B cell (primary cell): ENCODE measurements at regions of chr5 and their contacts with region 1.

Region 1: DNA sequence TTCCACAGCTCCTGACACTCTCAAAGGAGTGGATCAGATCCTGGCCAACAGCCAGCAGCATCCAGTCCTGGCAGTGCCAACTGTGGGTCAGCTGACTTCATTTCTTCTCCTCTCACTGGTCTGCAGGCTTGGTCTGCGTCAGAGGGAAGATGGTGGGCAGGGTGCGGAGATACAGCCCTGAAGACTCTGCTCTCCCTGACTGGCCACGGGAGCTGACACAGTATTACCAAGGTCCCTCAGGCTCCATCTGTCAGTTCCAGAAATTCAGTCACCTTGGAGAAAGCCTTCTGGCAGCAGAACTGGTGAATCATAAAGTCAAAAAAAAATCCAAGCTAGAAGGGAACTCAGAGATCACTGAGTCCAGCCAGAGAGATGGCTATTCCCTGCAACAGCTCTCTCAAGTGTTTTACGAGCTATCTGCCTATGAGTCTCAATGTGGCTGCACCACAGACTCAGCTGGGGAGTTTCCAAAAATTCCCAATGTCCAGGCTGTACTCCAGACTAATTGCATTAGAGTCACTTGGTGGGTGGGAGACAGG is 28.0 kb downstream of the C1QTNF2 start:
- DNase-seq: no peak
- ATAC-seq: no peak
- H3K4me3 ChIP-seq: no peak overlapping the region
- H3K4me3 Mint-ChIP-seq: no peak overlapping the region
- H3K27ac ChIP-seq: no peak overlapping the region
- H3K27ac Mint-ChIP-seq: no peak overlapping the region
- H3K4me1 ChIP-seq: no peaks in the 10 kb centered on the region
- H3K4me1 Mint-ChIP-seq: no peaks in the 10 kb centered on the region
- H3K27me3 ChIP-seq: peaks cover 0 to 4% (median 0%) of the 10 kb centered on the region in 4 experiments
- H3K27me3 Mint-ChIP-seq: no peaks in the 10 kb centered on the region
- CTCF ChIP-seq: no peak

Region 2: DNA sequence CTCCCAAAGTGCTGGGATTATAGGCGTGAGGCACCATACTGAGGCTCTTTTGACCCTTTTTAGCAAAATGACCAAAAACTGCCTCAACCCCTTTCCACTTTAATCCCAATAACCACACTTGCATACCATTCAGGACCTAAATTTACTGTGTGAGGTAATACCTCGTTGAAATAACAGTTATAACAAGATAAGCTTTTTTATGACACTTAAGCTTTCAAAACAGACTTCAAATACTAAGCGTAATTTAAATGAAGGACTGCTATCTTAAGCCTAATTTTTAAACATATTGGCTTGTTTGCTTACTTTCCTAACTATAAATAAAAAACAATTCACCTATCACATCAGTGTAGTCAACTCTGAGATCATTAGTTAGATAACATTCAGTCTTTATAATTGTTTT is 261.0 kb before region 1 on chr5:
- CTCF ChIA-PET with region 1: interaction called, 20 read pairs
- POLR2A ChIA-PET with region 1: no interaction called
- intact Hi-C with region 1: loop called (anchors 1 kb)
- DNase-seq: no peak
- ATAC-seq: no peak
- H3K4me3 ChIP-seq: no peak overlapping the region
- H3K4me3 Mint-ChIP-seq: no peak overlapping the region
- H3K27ac ChIP-seq: no peak overlapping the region
- H3K27ac Mint-ChIP-seq: no peak overlapping the region
- H3K4me1 ChIP-seq: no peaks in the 10 kb centered on the region
- H3K4me1 Mint-ChIP-seq: peaks cover 3% of the 10 kb centered on the region
- H3K27me3 ChIP-seq: no peaks in the 10 kb centered on the region
- H3K27me3 Mint-ChIP-seq: no peaks in the 10 kb centered on the region
- CTCF ChIP-seq: no peak

Region 3: DNA sequence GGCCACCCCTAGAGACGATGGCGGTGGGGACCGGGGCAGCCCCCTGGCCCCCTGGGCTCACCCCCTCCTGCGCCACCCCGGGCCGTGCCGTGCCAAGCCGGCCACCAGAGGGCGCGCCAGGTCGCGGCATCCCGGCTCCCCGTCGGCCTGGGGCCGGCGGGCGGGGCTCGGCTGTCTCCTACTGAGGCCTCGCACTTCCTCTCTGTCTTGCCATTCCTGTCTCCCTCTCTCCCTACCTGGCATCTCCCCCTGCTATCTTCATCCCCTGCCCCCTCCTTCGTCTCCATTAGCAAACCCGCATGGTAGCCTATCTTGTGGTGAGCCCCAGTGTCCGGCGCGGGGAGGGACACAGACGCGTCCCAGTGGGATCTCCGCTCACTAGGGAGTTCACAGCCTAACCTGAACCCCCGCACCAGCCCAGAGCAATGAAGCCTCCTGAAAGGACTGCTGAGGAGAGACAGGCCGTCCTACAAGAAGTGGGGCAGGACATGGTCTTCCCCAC is 143.0 kb before region 1 on chr5:
- CTCF ChIA-PET with region 1: interaction called, 31 read pairs
- POLR2A ChIA-PET with region 1: no interaction called
- intact Hi-C with region 1: no loop called
- DNase-seq: peak; percentile 74
- ATAC-seq: peak; percentile 96
- H3K4me3 ChIP-seq: peak overlapping the region in 3 of 5 experiments; percentile 42 to 66 (median 53)
- H3K4me3 Mint-ChIP-seq: peak overlapping the region; percentile 83
- H3K27ac ChIP-seq: no peak overlapping the region
- H3K27ac Mint-ChIP-seq: no peak overlapping the region
- H3K4me1 ChIP-seq: peaks cover 10% of the 10 kb centered on the region in 2 donors
- H3K4me1 Mint-ChIP-seq: peaks cover 8% of the 10 kb centered on the region
- H3K27me3 ChIP-seq: peaks cover 0 to 21% (median 5%) of the 10 kb centered on the region in 4 experiments
- H3K27me3 Mint-ChIP-seq: peaks cover 35% of the 10 kb centered on the region
- CTCF ChIP-seq: peak; percentile 91

Region 4: GRCh38 chr5:160418561-160419457 is 76.3 kb after region 1 on chr5 and contains the start of gene SLU7:
- CTCF ChIA-PET with region 1: no interaction called
- POLR2A ChIA-PET with region 1: no interaction called
- intact Hi-C with region 1: no loop called
- DNase-seq: peak; percentile 97
- ATAC-seq: peak; percentile 73
- H3K4me3 ChIP-seq: peak within 1 kb of the TSS; percentile 72 to 99 (median 95)
- H3K4me3 Mint-ChIP-seq: peak within 1 kb of the TSS; percentile 92
- H3K27ac ChIP-seq: peak within 1 kb of the TSS; percentile 95
- H3K27ac Mint-ChIP-seq: peak within 1 kb of the TSS; percentile 91
- H3K4me1 ChIP-seq: peaks cover 32 to 41% of the 10 kb centered on the region in 2 donors
- H3K4me1 Mint-ChIP-seq: peaks cover 64% of the 10 kb centered on the region
- H3K27me3 ChIP-seq: no peaks in the 10 kb centered on the region
- H3K27me3 Mint-ChIP-seq: no peaks in the 10 kb centered on the region
- CTCF ChIP-seq: no peak
- total RNA-seq, gene SLU7: 68.3 and 83.2 TPM in 2 replicates